ENCODE measurements at regions of chr3 and their contacts with region 1.

Region 1: GRCh38 chr3:90007778-90008499 is 900.5 kb downstream of the EPHA3 start:
- DNase-seq: no peak
- ATAC-seq: peak; percentile 66
- H3K4me3 ChIP-seq: no peak overlapping the region
- H3K27ac ChIP-seq: no peak overlapping the region
- H3K4me1 ChIP-seq: no peaks in the 10 kb centered on the region
- H3K27me3 ChIP-seq: no peaks in the 10 kb centered on the region
- CTCF ChIP-seq: no peak
- EP300 ChIP-seq: no peak
- POLR2A ChIP-seq: no peak
- RAD21 ChIP-seq: no peak

Region 2: DNA sequence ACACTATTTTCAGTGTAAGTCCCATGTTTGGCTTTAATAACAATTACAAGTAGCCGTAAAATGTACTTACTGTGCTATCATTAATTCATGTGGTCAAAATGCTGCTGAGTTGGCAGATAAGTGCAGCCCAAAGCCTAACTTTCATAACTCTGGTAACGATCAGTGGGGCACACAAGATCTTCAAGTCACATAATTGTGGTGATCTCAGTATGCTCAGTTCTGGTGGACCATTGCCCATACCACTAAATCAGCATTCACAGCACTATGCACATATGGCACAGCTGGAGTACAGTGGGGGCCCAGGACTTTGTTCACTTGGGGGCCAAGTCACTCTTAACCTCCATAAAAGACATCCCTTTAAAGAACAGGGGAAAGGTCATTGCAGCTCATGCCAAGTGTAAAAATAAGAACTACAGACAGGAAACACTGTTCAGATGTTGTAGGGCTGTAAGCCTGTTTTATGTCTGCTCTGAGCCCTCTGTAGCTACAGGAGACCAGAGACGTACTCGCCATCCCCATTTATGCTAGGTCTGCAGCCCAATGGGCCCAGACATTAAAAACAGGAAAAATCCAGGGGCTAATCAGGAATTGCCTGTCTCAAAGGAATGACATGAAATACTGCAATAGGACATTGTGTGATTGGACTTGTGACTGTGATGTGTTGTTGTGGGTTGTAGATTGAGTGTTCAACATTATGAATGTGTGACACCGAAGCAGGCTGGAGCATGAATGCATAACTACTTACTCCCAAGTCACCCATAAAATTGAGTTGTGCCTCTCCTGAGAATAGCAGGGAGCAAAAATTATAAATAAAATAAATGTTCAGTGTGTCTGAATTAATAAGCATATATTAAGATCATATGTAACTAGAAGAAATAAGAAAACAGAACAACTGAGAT is 1183.0 kb before region 1 on chr3:
- CTCF ChIA-PET with region 1: no interaction called
- POLR2A ChIA-PET with region 1: no interaction called
- RAD21 ChIA-PET with region 1: no interaction called
- SMC1A ChIA-PET with region 1: no interaction called
- in situ Hi-C with region 1: no loop called
- intact Hi-C with region 1: no loop called
- DNase-seq: no peak
- ATAC-seq: no peak
- H3K4me3 ChIP-seq: no peak overlapping the region
- H3K27ac ChIP-seq: no peak overlapping the region
- H3K4me1 ChIP-seq: no peaks in the 10 kb centered on the region
- H3K27me3 ChIP-seq: no peaks in the 10 kb centered on the region
- CTCF ChIP-seq: no peak
- EP300 ChIP-seq: no peak
- POLR2A ChIP-seq: no peak
- RAD21 ChIP-seq: no peak

Region 3: GRCh38 chr3:90025005-90025404 is 17.1 kb after region 1 on chr3:
- CTCF ChIA-PET with region 1: interaction called, 3 read pairs
- POLR2A ChIA-PET with region 1: interaction called, 11 read pairs
- RAD21 ChIA-PET with region 1: interaction called, 3 read pairs
- SMC1A ChIA-PET with region 1: interaction called, 23 read pairs
- in situ Hi-C with region 1: no loop called
- intact Hi-C with region 1: no loop called
- DNase-seq: no peak
- ATAC-seq: no peak; the same call in 2 of the 3 replicates
- H3K4me3 ChIP-seq: no peak overlapping the region
- H3K27ac ChIP-seq: no peak overlapping the region
- H3K4me1 ChIP-seq: no peaks in the 10 kb centered on the region
- H3K27me3 ChIP-seq: no peaks in the 10 kb centered on the region
- CTCF ChIP-seq: no peak
- EP300 ChIP-seq: no peak
- POLR2A ChIP-seq: no peak
- RAD21 ChIP-seq: no peak

Region 4: GRCh38 chr3:90035643-90036042 is 27.7 kb after region 1 on chr3:
- CTCF ChIA-PET with region 1: interaction called, 8 read pairs
- POLR2A ChIA-PET with region 1: interaction called, 9 read pairs
- RAD21 ChIA-PET with region 1: interaction called, 24 read pairs
- SMC1A ChIA-PET with region 1: interaction called, 31 read pairs
- in situ Hi-C with region 1: no loop called
- intact Hi-C with region 1: no loop called
- DNase-seq: no peak
- ATAC-seq: peak; percentile 80
- H3K4me3 ChIP-seq: no peak overlapping the region
- H3K27ac ChIP-seq: no peak overlapping the region
- H3K4me1 ChIP-seq: no peaks in the 10 kb centered on the region
- H3K27me3 ChIP-seq: no peaks in the 10 kb centered on the region
- CTCF ChIP-seq: no peak
- EP300 ChIP-seq: peak; percentile 77 to 84; a peak in 2 of 4 replicates
- POLR2A ChIP-seq: no peak
- RAD21 ChIP-seq: no peak

Region 5: DNA sequence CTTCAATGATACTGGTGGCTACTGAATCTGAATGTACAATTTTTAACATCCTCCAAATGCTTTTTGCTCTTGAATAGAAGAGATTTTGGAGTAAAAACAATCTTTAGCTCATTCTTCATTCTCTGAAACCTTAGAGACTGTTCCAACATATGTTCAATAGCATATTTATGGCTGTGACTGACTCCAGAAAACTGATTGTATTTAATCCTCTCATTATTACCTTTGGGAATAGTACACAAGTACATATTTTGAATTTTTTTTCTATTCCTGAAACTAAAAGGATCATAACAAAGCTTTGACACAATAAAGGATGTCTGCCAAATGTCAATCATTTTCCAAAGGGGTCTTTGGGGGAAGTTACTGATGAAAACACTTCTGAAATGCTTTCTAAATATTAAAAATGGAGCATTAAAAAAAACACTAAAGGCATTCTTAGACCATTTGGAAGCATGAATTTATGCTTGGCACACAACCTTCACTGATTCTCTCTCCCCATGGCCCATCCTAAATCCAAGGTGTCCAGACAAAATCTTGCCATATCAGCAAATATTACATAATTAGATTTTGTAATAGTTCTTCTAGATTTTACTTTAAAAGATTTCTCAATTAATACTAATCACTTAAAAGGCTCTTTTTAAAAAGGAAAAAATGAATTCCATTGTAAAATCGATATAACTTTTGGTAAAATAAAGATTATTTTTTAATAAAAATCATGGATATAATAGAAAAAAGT is 36.3 kb after region 1 on chr3:
- CTCF ChIA-PET with region 1: interaction called, 3 read pairs
- POLR2A ChIA-PET with region 1: interaction called, 3 read pairs
- RAD21 ChIA-PET with region 1: interaction called, 12 read pairs
- SMC1A ChIA-PET with region 1: interaction called, 9 read pairs
- in situ Hi-C with region 1: no loop called
- intact Hi-C with region 1: no loop called
- DNase-seq: no peak
- ATAC-seq: no peak
- H3K4me3 ChIP-seq: no peak overlapping the region
- H3K27ac ChIP-seq: no peak overlapping the region
- H3K4me1 ChIP-seq: no peaks in the 10 kb centered on the region
- H3K27me3 ChIP-seq: no peaks in the 10 kb centered on the region
- CTCF ChIP-seq: no peak
- EP300 ChIP-seq: no peak
- POLR2A ChIP-seq: no peak
- RAD21 ChIP-seq: no peak

Region 6: GRCh38 chr3:90055666-90056065 is 47.7 kb after region 1 on chr3:
- CTCF ChIA-PET with region 1: interaction called, 7 read pairs
- POLR2A ChIA-PET with region 1: no interaction called
- RAD21 ChIA-PET with region 1: interaction called, 9 read pairs
- SMC1A ChIA-PET with region 1: interaction called, 11 read pairs
- in situ Hi-C with region 1: no loop called
- intact Hi-C with region 1: no loop called
- DNase-seq: no peak
- ATAC-seq: peak; percentile 12; the same call in 1 of the 3 replicates
- H3K4me3 ChIP-seq: no peak overlapping the region
- H3K27ac ChIP-seq: no peak overlapping the region
- H3K4me1 ChIP-seq: no peaks in the 10 kb centered on the region
- H3K27me3 ChIP-seq: no peaks in the 10 kb centered on the region
- CTCF ChIP-seq: no peak
- EP300 ChIP-seq: no peak
- POLR2A ChIP-seq: no peak
- RAD21 ChIP-seq: no peak